ENCODE measurements at regions of chr6 and their contacts with region 1.

Region 1: DNA sequence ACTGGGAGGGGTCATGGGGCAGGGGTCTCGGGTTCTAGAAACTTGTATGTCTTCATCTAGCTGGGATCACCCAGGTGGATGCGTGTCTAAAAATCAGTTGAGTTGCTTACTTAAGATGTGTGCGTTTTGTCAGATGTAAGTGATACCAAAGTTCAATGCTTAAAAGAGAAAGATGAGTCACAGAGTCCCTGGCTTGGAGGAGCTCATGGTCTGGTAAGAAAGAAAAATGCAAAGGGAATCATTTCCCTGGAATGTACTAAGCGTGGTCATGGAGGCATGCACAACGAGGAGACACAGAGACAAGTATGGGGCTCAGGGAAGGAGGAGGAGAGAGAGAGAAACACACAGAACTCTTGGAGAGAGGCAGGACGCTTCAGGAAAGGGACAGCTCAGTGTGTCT is 186.8 kb upstream of the GMDS start:
- DNase-seq: peak; percentile 87
- H3K4me3 ChIP-seq: no peak overlapping the region
- H3K27ac ChIP-seq: peak overlapping the region; percentile 10
- H3K4me1 ChIP-seq: peaks cover 32% of the 10 kb centered on the region
- H3K27me3 ChIP-seq: no peaks in the 10 kb centered on the region
- CTCF ChIP-seq: no peak

Region 2: GRCh38 chr6:2020909-2021308 is 411.3 kb before region 1 on chr6:
- CTCF ChIA-PET with region 1: no interaction called
- dilution Hi-C with region 1: no loop called
- in situ Hi-C with region 1: no loop called
- intact Hi-C with region 1: no loop called
- DNase-seq: peak; percentile 83
- H3K4me3 ChIP-seq: no peak overlapping the region
- H3K27ac ChIP-seq: peak overlapping the region; percentile 74
- H3K4me1 ChIP-seq: peaks cover 19% of the 10 kb centered on the region
- H3K27me3 ChIP-seq: no peaks in the 10 kb centered on the region
- CTCF ChIP-seq: no peak

Region 3: DNA sequence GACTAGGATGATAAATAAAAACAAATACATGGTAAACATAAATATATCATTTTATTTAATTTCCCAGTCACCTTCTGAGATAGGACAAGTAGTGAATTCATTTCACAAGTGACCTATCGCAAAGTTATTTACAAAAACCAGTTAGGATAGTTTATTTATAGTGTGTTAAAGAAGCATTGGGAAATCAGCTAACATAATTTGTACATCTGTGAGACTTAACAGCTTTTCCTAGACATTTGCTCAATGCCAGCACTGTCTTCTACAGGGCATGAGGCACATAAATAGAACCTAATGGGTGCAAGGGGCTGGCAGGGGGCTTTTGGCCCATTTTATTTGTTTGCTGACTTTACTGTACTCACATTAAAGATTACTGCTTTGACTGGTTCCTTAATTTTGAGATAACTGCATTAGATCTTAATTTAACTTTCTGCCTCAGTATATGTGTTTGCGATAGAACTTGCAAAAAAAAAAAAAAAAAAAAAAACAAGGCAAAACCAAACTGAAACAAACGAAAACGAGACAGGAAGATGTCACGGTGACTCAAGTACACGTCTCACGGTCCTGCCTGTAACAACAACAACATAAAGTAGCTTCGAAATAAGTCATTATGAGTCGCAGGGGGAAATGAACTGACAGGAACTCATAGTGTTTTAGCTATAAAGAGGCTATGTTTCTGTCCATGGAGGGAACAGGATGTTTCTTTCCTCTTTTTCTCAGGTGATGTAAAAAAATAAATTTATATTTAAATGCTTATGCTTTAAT is 53.2 kb before region 1 on chr6:
- CTCF ChIA-PET with region 1: interaction called, 21 read pairs
- dilution Hi-C with region 1: no loop called
- in situ Hi-C with region 1: no loop called
- intact Hi-C with region 1: no loop called
- DNase-seq: peak; percentile 85
- H3K4me3 ChIP-seq: no peak overlapping the region
- H3K27ac ChIP-seq: peak overlapping the region; percentile 20
- H3K4me1 ChIP-seq: peaks cover 25% of the 10 kb centered on the region
- H3K27me3 ChIP-seq: no peaks in the 10 kb centered on the region
- CTCF ChIP-seq: no peak